Activated B cell treated with CpG ODN at 0.5 μM for 24 hours (primary cell): ENCODE measurements at regions of chr16 and their contacts with region 1.

Region 1: DNA sequence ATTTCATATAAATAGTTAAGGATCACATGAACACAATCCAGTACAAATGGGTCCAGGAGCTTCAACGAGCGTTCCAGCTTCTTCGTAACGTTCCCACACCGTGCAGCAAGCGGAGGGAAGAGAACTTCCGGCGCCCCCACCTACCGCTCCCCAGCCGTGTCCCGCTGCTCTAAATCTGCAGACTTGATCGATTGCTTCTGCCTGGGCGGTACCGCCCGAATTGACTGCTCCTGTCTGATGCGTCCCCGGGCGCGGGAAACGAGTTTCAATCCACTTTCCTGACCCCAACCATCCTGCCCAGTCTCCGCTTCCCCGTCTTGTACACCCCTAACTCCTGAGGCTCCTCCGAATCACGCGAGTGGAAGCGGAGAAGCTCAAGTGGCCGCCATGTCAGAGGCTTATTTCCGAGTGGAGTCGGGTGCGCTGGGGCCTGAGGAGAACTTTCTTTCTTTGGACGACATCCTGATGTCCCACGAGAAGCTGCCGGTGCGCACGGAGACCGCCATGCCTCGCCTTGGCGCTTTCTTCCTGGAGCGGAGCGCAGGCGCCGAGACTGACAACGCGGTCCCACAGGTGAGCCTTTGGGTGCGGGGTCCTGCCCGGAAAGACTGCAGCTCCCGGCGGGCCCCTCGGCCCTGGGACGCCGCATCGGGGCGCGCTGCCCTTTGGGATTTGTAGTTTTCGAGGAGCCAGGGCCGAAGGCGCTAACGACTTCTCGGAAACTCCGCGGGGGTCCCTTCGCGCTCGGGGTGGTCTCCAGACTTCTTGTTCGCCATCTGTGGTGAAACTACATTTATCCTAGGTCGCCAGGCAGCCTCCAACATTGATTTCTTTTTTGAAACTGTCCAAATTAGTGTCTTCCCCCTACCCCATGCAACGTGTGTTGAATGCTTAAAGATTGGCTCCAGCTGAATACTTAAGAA is at the start of gene GINS3:
- DNase-seq: peak; percentile 77
- ATAC-seq: peak; percentile 97
- H3K4me3 Mint-ChIP-seq: peak within 1 kb of the TSS; percentile 100
- H3K27ac Mint-ChIP-seq: peak within 1 kb of the TSS; percentile 97
- H3K4me1 Mint-ChIP-seq: peaks cover 15% of the 10 kb centered on the region
- H3K27me3 Mint-ChIP-seq: peaks cover 3% of the 10 kb centered on the region
- CTCF ChIP-seq: no peak
- total RNA-seq, gene GINS3: 5.3 and 6.9 TPM in 2 replicates

Region 2: GRCh38 chr16:58025351-58026138 is 366.9 kb before region 1 on chr16 and contains the start of gene MMP15:
- CTCF ChIA-PET with region 1: no interaction called
- POLR2A ChIA-PET with region 1: no interaction called
- intact Hi-C with region 1: loop called (anchors 5 kb)
- DNase-seq: peak; percentile 47
- ATAC-seq: peak; percentile 69
- H3K4me3 Mint-ChIP-seq: peak within 1 kb of the TSS; percentile 84
- H3K27ac Mint-ChIP-seq: peak within 1 kb of the TSS; percentile 36
- H3K4me1 Mint-ChIP-seq: peaks cover 11% of the 10 kb centered on the region
- H3K27me3 Mint-ChIP-seq: peaks cover 23% of the 10 kb centered on the region
- CTCF ChIP-seq: no peak
- total RNA-seq, gene MMP15: 0.60 TPM in 1 of 2 replicates, not detected in the other

Region 3: DNA sequence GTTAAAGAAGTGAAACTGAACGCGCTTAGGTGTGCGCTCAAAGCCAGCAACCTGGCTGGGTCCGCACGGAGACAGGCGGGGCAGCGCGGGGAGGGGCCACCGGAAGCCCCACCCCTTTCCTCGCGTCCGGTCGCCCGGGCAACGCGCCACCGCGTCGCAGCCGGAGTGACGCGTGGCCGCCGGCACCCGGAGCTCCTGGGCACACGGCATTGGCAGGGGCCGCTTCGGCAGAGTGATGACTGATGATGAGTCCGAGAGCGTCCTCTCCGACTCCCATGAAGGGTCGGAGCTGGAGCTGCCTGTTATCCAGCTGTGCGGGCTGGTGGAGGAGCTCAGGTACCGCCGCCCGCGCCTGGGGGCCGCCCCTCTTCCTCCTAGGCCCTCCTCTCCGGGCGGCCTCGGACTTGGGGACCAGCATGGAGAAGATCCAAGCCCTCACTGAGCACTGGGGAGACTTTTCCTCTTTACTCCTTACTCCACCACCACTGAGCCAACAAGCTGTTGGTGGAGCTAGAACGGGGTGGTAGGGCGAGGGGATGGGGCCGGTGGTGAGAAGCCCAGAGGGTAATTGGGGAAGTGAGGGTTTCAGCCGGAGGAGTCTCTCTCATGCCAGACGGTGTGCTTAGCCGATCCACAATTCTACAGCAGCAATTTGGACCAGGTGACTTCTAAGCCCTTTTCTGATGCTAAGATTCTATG is 142.5 kb before region 1 on chr16:
- CTCF ChIA-PET with region 1: no interaction called
- POLR2A ChIA-PET with region 1: no interaction called
- intact Hi-C with region 1: loop called (anchors 1 kb)
- DNase-seq: peak; percentile 93
- ATAC-seq: peak; percentile 90
- H3K4me3 Mint-ChIP-seq: peak overlapping the region; percentile 87
- H3K27ac Mint-ChIP-seq: peak overlapping the region; percentile 71
- H3K4me1 Mint-ChIP-seq: peaks cover 28% of the 10 kb centered on the region
- H3K27me3 Mint-ChIP-seq: no peaks in the 10 kb centered on the region
- CTCF ChIP-seq: no peak

Region 4: DNA sequence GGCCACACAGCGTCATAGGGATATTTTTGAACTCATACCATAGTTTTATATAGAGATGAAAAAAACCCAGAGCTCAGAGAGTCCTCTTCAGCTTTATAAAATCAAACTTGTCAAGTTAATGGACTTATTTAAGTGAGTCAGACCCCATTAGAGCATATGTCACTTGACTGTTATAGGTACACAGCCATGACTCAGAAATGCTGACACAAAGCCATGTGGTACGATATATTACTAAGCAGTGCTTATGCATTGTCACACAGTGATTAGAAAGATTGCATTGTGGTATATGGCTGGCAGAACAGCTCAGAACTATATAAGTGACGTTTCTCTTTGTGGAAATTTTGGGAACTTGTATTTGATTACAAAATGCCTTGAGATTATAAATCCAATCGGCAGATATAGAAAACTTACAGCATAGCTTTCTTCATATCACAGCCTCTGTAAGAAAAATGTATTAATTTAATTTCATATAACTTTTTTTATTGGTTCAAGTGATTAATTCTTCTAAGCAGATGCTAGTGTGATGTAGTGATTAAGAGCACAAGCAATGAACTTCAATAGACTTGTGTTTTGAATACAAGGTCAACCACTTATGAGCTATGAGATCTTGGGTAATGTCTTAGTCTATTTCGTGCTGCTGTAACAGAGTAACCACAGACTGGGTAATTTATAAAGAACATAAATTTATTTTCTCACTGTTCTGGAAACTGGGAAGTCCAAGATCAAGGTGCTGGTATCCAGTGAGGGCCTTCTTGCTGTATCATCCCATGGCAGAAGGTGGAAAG is 26.0 kb before region 1 on chr16:
- CTCF ChIA-PET with region 1: no interaction called
- POLR2A ChIA-PET with region 1: no interaction called
- intact Hi-C with region 1: no loop called
- DNase-seq: no peak
- ATAC-seq: no peak
- H3K4me3 Mint-ChIP-seq: no peak overlapping the region
- H3K27ac Mint-ChIP-seq: no peak overlapping the region
- H3K4me1 Mint-ChIP-seq: no peaks in the 10 kb centered on the region
- H3K27me3 Mint-ChIP-seq: peaks cover 19% of the 10 kb centered on the region
- CTCF ChIP-seq: no peak

Region 5: DNA sequence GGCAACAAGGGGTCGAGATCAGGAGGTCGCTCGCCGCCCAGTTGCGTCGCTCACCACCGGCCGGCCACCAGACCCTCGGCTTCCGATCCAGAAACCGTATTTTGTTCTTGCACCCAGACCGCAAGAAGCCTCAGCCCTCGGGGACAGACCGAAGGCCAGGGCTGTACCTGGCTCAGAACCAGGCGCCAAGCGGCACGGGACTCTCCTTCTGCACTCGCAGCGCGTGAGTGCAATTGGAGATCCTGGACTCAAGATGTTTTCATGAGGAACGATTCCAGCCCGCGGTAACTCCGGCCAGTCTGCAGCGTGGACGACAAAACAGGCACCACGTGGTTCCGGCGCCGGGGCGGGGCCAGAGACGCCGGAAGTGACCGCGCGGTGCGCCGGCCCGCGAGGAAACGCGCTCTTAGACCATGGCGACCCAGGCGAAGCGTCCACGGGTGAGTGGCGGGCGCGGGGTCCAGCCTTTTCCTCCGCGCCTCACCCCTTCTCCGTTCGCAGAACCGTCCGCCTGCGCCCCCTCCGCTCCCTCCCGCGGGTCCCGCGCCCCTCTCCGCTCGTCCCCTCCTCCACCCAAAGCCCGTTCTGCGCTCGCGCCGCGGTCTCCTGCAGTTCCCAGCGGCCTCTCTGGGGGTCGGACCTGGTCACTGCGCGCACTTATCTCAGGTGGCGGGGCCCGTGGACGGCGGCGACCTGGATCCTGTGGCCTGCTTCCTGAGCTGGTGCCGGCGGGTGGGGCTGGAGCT is 122.8 kb after region 1 on chr16 and contains the start of gene SETD6:
- CTCF ChIA-PET with region 1: no interaction called
- POLR2A ChIA-PET with region 1: no interaction called
- intact Hi-C with region 1: loop called (anchors 2 kb)
- DNase-seq: peak; percentile 81
- ATAC-seq: peak; percentile 77
- H3K4me3 Mint-ChIP-seq: peak within 1 kb of the TSS; percentile 91
- H3K27ac Mint-ChIP-seq: peak within 1 kb of the TSS; percentile 84
- H3K4me1 Mint-ChIP-seq: peaks cover 24% of the 10 kb centered on the region
- H3K27me3 Mint-ChIP-seq: no peaks in the 10 kb centered on the region
- CTCF ChIP-seq: no peak
- total RNA-seq, gene SETD6: 25.6 and 31.1 TPM in 2 replicates

Region 6: GRCh38 chr16:58684354-58685083 is 292.0 kb after region 1 on chr16 and contains the start of gene SLC38A7:
- CTCF ChIA-PET with region 1: no interaction called
- POLR2A ChIA-PET with region 1: interaction called, 5 read pairs
- intact Hi-C with region 1: loop called (anchors 5 kb)
- DNase-seq: peak; percentile 63
- ATAC-seq: peak; percentile 93
- H3K4me3 Mint-ChIP-seq: peak within 1 kb of the TSS; percentile 94
- H3K27ac Mint-ChIP-seq: peak within 1 kb of the TSS; percentile 82
- H3K4me1 Mint-ChIP-seq: peaks cover 20% of the 10 kb centered on the region
- H3K27me3 Mint-ChIP-seq: peaks cover under 1% of the 10 kb centered on the region
- CTCF ChIP-seq: no peak
- total RNA-seq, gene SLC38A7: 14.5 and 18.8 TPM in 2 replicates